Heart right ventricle (tissue), 16 donors: ENCODE measurements at regions of chr11 and their contacts with region 1.

Region 1: DNA sequence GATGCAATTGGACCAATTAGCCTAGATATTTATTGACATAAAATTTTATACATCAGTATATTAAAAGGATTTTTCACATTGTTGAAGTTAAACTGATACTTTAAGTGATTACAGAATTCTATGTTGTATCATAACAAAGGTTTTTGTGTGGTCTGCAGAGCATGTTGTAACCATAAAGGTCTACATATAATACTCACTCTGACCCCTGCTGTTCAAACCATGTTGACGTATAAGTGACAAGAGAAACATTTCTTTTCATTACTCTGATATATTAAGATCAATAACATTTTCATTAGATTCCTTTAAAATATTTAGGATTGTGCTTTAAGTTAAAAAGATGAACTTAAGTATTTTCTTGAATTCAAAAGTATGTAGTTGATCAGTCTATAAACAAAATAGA is 63.9 kb downstream of the GAS2 start:
- DNase-seq: no peak
- ATAC-seq: no peak
- H3K4me3 ChIP-seq: no peak overlapping the region
- H3K27ac ChIP-seq: no peak overlapping the region
- H3K4me1 ChIP-seq: peaks cover 0 to 27% (median 0%) of the 10 kb centered on the region in 9 donors
- H3K27me3 ChIP-seq: no peaks in the 10 kb centered on the region
- CTCF ChIP-seq: peak in 7 of 9 donors; percentile 27 to 55 (median 35)

Region 2: GRCh38 chr11:22331771-22332170 is 398.5 kb before region 1 on chr11:
- intact Hi-C with region 1: loop called in 1 of 10 experiments (anchors 5 kb)
- DNase-seq: no peak
- ATAC-seq: no peak
- H3K4me3 ChIP-seq: no peak overlapping the region
- H3K27ac ChIP-seq: no peak overlapping the region
- H3K4me1 ChIP-seq: no peaks in the 10 kb centered on the region
- H3K27me3 ChIP-seq: peaks cover 0 to 34% (median 14%) of the 10 kb centered on the region in 7 donors
- CTCF ChIP-seq: peak in 1 of 9 donors; percentile 12

Region 3: GRCh38 chr11:22625448-22626287 is 104.7 kb before region 1 on chr11 and contains the start of gene FANCF:
- intact Hi-C with region 1: loop called in 3 of 10 experiments (anchors 5 to 10 kb)
- DNase-seq: peak; percentile 87 to 98
- ATAC-seq: peak; percentile 98 to 99 (median 98)
- H3K4me3 ChIP-seq: peak within 1 kb of the TSS; percentile 37 to 98 (median 84)
- H3K27ac ChIP-seq: peak within 1 kb of the TSS; percentile 60 to 94 (median 85)
- H3K4me1 ChIP-seq: peaks cover 0 to 22% (median 18%) of the 10 kb centered on the region in 9 donors
- H3K27me3 ChIP-seq: no peaks in the 10 kb centered on the region
- CTCF ChIP-seq: no peak
- total RNA-seq, gene FANCF: 3.1 to 7.6 (median 4.8) TPM

Region 4: GRCh38 chr11:22640862-22641261 is 89.5 kb before region 1 on chr11:
- intact Hi-C with region 1: no loop called
- DNase-seq: no peak
- ATAC-seq: no peak
- H3K4me3 ChIP-seq: no peak overlapping the region
- H3K27ac ChIP-seq: no peak overlapping the region
- H3K4me1 ChIP-seq: no peaks in the 10 kb centered on the region
- H3K27me3 ChIP-seq: no peaks in the 10 kb centered on the region
- CTCF ChIP-seq: no peak

Region 5: DNA sequence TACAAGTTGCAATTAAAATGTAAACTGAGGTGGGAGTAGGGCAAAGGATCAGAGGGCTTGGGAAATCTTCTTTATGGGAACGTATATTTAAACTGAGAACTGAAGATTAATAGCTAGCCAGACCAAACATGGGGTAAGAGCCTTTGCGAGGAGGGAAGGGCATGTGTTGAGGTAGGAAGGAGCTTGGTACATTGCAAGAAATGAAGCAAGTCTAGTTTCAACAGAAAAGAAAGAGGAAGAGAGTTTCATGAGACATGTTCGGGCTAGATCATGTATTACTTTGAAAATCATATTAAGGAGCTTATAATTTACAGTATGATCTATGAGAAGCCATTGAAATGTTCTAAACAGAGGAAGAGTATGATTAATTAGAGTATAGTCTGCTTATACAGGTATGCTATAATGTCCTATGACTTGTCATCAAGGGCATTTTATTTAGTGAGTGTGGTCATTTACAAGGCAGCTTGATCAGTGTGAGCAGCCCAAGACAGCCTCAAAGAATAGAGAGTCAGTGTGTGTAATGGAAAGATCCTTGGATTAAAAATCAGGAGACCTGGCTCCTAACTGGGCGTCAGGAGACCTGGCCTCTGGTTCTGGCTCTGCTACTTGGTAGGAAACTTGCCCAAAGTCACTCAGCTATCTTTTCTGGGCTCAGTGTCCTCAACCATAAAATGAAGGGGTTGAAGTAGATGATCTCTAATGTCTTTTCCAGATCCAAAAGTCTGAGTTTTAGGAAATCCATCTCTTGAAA is 53.0 kb before region 1 on chr11:
- intact Hi-C with region 1: loop called in 4 of 10 experiments (anchors 5 to 10 kb)
- DNase-seq: no peak
- ATAC-seq: peak in 5 of 8 donors; percentile 54 to 81 (median 61)
- H3K4me3 ChIP-seq: no peak overlapping the region
- H3K27ac ChIP-seq: peak overlapping the region in 2 of 10 donors; percentile 45
- H3K4me1 ChIP-seq: peaks cover 0 to 15% (median 0%) of the 10 kb centered on the region in 9 donors
- H3K27me3 ChIP-seq: no peaks in the 10 kb centered on the region
- CTCF ChIP-seq: no peak

Region 6: DNA sequence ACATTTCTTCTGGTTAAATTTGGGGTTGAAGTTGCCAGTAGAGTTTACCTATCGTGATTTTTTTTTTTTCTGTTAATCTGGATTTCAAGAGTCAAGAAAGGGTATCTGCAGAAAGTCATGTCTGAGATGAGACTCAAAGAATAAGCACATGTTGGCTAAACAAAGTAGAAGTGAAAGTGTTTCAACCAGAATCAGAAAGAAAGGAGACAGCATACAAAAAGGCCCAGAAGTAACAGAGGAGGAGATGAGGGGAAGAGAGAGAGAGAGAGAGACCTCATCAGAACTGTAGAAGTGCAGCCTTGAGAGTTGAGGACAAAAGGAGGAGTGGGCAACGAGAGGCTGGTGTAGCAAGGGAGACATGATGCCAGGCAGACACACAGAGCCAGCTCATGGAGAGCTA is 44.4 kb after region 1 on chr11:
- intact Hi-C with region 1: no loop called
- DNase-seq: no peak
- ATAC-seq: no peak
- H3K4me3 ChIP-seq: no peak overlapping the region
- H3K27ac ChIP-seq: no peak overlapping the region
- H3K4me1 ChIP-seq: no peaks in the 10 kb centered on the region
- H3K27me3 ChIP-seq: no peaks in the 10 kb centered on the region
- CTCF ChIP-seq: no peak

Region 7: DNA sequence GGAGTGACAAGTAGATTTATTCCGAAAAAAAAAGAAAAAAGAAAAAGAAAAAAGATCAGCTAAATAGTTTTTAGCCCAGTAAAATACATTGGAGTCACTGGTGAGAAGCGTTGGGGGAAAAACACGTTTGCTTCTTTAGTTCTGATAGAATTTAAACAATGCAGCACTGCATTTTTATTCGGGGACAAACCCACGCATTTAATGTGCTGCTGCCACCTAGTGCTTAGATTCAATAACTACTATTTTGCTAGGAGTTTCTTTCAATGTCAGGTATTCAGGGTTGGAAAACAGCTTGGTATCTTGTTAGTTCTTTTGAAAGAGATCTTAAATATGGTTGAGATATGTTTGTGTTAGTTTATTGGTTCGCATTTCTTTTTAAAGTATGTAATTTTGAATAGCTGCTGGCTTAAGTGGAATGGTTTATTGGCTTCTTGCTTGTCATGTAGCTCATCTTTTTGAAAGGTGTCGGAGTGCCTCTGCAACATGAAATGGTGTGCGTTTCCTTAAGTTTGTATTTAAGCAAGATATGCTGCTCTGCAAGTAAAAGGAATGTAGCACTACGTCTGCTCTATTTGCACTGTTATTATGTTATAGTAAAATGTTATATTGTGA is 57.3 kb after region 1 on chr11:
- intact Hi-C with region 1: no loop called
- DNase-seq: no peak
- ATAC-seq: no peak
- H3K4me3 ChIP-seq: no peak overlapping the region
- H3K27ac ChIP-seq: no peak overlapping the region
- H3K4me1 ChIP-seq: peaks cover 0 to 4% (median 0%) of the 10 kb centered on the region in 9 donors
- H3K27me3 ChIP-seq: no peaks in the 10 kb centered on the region
- CTCF ChIP-seq: peak; percentile 45 to 85 (median 76)

Region 8: GRCh38 chr11:23078289-23078971 is 348.1 kb after region 1 on chr11:
- intact Hi-C with region 1: no loop called
- DNase-seq: no peak
- ATAC-seq: no peak
- H3K4me3 ChIP-seq: no peak overlapping the region
- H3K27ac ChIP-seq: no peak overlapping the region
- H3K4me1 ChIP-seq: no peaks in the 10 kb centered on the region
- H3K27me3 ChIP-seq: no peaks in the 10 kb centered on the region
- CTCF ChIP-seq: no peak